ENCODE measurements at regions of chr11 and their contacts with region 1.

Region 1: DNA sequence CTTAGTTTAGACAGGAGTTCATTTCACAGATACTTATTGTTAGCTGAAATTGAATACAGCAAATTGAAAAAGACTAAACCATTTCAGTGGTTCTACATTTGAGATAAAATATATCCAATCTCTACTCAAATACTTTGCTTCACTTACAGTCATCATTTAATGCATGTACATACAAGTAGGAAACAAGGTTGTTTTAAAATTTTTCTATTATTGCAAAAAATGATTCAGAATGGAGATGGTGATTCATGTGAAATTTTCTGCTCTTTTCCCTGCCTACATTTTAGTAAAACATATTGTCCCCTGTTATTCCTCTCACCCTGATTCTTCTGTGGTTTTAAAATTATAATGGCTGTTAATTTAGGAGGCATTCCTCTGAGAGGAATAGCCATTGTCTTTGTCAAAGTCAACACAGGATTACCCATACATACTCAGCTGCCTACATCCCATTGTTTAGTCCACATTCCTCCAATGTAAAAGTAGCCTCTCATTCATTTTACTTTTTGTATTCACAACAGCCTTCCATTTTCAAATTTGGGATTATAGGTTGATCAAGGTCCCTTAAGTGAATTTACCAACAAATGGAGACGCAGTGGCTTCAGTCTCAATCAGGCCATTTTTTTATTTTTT is 60.1 kb downstream of the TRPC6 start:
- DNase-seq: no peak
- ATAC-seq: no peak
- H3K4me3 ChIP-seq: no peak overlapping the region
- H3K27ac ChIP-seq: no peak overlapping the region
- H3K4me1 ChIP-seq: no peaks in the 10 kb centered on the region
- H3K27me3 ChIP-seq: no peaks in the 10 kb centered on the region
- CTCF ChIP-seq: no peak
- POLR2A ChIP-seq: no peak
- RAD21 ChIP-seq: no peak

Region 2: GRCh38 chr11:101043940-101044339 is 479.8 kb before region 1 on chr11:
- CTCF ChIA-PET with region 1: no interaction called
- POLR2A ChIA-PET with region 1: no interaction called
- dilution Hi-C with region 1: no loop called
- in situ Hi-C with region 1: no loop called
- intact Hi-C with region 1: no loop called
- DNase-seq: no peak
- ATAC-seq: no peak
- H3K4me3 ChIP-seq: no peak overlapping the region
- H3K27ac ChIP-seq: no peak overlapping the region
- H3K4me1 ChIP-seq: no peaks in the 10 kb centered on the region
- H3K27me3 ChIP-seq: no peaks in the 10 kb centered on the region
- CTCF ChIP-seq: no peak
- POLR2A ChIP-seq: no peak
- RAD21 ChIP-seq: no peak

Region 3: GRCh38 chr11:101476193-101476592 is 47.6 kb before region 1 on chr11:
- CTCF ChIA-PET with region 1: no interaction called
- POLR2A ChIA-PET with region 1: no interaction called
- dilution Hi-C with region 1: no loop called
- in situ Hi-C with region 1: no loop called
- intact Hi-C with region 1: loop called (anchors 1 kb)
- DNase-seq: no peak
- ATAC-seq: no peak
- H3K4me3 ChIP-seq: no peak overlapping the region
- H3K27ac ChIP-seq: no peak overlapping the region
- H3K4me1 ChIP-seq: peaks cover 3% of the 10 kb centered on the region
- H3K27me3 ChIP-seq: no peaks in the 10 kb centered on the region
- CTCF ChIP-seq: no peak
- POLR2A ChIP-seq: no peak
- RAD21 ChIP-seq: no peak

Measured in IMR-90 (cell line).